HCT116 (cell line): ENCODE measurements at regions of chr13 and their contacts with region 1.

Region 1: GRCh38 chr13:52968074-52968700 is 60.4 kb upstream of the OLFM4 start:
- DNase-seq: peak; percentile 54
- ATAC-seq: peak; percentile 100
- H3K4me3 ChIP-seq: no peak overlapping the region
- H3K27ac ChIP-seq: no peak overlapping the region
- H3K4me1 ChIP-seq: no peaks in the 10 kb centered on the region
- H3K27me3 ChIP-seq: peaks cover 14% of the 10 kb centered on the region
- CTCF ChIP-seq: peak; percentile 85 to 91 (median 90)
- POLR2A ChIP-seq: no peak
- RAD21 ChIP-seq: peak; percentile 76

Region 2: GRCh38 chr13:52665325-52665724 is 302.9 kb before region 1 on chr13:
- CTCF ChIA-PET with region 1: interaction called, 49 read pairs
- POLR2A ChIA-PET with region 1: no interaction called
- RAD21 ChIA-PET with region 1: interaction called, 3 to 6 read pairs
- intact Hi-C with region 1: loop called (anchors 5 kb)
- DNase-seq: peak; percentile 16
- ATAC-seq: no peak
- H3K4me3 ChIP-seq: no peak overlapping the region
- H3K27ac ChIP-seq: no peak overlapping the region
- H3K4me1 ChIP-seq: no peaks in the 10 kb centered on the region
- H3K27me3 ChIP-seq: no peaks in the 10 kb centered on the region
- CTCF ChIP-seq: peak; percentile 20 to 61 (median 54); a peak in 4 of 6 replicates
- POLR2A ChIP-seq: no peak
- RAD21 ChIP-seq: no peak

Region 3: DNA sequence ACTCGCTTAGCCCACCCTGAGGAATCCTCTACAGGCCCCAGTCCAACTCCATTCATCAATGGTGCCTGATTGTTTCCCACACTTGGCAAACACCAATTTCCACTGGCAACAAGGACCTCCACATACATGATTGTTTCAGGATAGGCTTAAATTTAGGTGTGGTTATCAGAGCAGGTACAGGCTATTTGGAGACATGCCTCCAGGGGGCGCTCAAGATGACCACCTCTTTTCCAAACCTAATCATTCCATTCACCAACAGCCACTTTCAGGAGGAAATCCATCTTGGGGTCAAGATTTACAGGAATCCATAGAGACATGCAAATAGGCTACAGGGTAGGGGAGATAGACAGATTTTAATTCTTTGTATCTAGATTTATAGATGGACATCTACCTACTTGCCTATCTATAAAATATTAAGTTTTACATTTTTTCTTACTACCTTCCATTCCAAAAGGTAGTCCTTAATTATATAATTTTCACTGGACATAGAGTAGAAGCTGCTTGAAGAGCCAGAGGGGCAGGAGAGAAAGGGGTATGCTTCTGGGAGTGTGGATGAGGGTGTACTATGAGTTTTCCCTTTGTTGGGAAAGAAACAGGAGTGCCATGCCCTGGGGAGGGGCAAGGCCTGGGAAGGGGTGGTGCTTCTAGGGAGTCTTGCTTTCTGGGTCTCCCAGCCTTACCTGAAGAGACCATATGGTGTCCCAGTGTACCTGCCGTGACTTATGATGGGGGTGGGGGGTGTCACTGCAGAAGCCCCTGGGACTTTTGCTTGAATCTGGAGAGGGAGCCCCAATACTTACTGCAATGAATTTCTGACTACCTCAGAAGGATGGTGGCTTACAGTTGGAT is 105.6 kb before region 1 on chr13:
- CTCF ChIA-PET with region 1: interaction called, 6 read pairs
- POLR2A ChIA-PET with region 1: no interaction called
- RAD21 ChIA-PET with region 1: interaction called in 1 of 2 experiments, 3 read pairs
- intact Hi-C with region 1: loop called (anchors 2 kb)
- DNase-seq: peak; percentile 24
- ATAC-seq: peak; percentile 90
- H3K4me3 ChIP-seq: no peak overlapping the region
- H3K27ac ChIP-seq: no peak overlapping the region
- H3K4me1 ChIP-seq: no peaks in the 10 kb centered on the region
- H3K27me3 ChIP-seq: peaks cover 30% of the 10 kb centered on the region; the same call in 1 of the 2 replicates
- CTCF ChIP-seq: peak; percentile 9 to 88 (median 83); a peak in 4 of 6 replicates
- POLR2A ChIP-seq: no peak
- RAD21 ChIP-seq: peak; percentile 17; the same call in 1 of the 2 replicates

Region 4: GRCh38 chr13:52896827-52897659 is 71.1 kb before region 1 on chr13:
- CTCF ChIA-PET with region 1: interaction called, 18 read pairs
- POLR2A ChIA-PET with region 1: no interaction called
- RAD21 ChIA-PET with region 1: interaction called in 1 of 2 experiments, 4 read pairs
- intact Hi-C with region 1: no loop called
- DNase-seq: peak; percentile 2
- ATAC-seq: peak; percentile 67
- H3K4me3 ChIP-seq: no peak overlapping the region
- H3K27ac ChIP-seq: no peak overlapping the region
- H3K4me1 ChIP-seq: no peaks in the 10 kb centered on the region
- H3K27me3 ChIP-seq: peaks cover 18% of the 10 kb centered on the region; the same call in 1 of the 2 replicates
- CTCF ChIP-seq: peak; percentile 4 to 74 (median 64); a peak in 4 of 6 replicates
- POLR2A ChIP-seq: no peak
- RAD21 ChIP-seq: 0 out of 2 replicates have a peak, but pooled peaks have one; percentile 26

Region 5: DNA sequence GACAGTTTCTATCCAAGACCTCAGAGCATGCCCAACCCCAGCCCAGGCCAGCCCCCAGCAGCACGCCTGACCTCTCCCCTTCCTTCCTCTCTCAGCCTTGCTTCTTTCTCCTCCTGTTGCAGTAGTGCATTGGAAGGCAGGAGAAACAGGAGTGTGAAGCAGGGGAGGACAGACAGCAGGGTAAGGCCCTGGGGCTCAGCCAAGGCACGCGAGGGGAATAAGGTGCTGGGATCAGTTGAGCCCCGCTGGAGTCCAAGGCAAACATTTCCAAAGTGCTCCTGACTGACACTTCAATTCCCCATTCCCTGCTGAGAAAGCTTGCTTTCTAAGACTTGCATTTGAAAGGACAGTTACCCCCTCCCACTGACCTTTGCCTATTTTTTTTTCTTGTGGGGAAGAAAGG is 12.7 kb before region 1 on chr13:
- CTCF ChIA-PET with region 1: interaction called, 11 read pairs
- POLR2A ChIA-PET with region 1: no interaction called
- RAD21 ChIA-PET with region 1: no interaction called
- intact Hi-C with region 1: no loop called
- DNase-seq: no peak
- ATAC-seq: no peak
- H3K4me3 ChIP-seq: no peak overlapping the region
- H3K27ac ChIP-seq: no peak overlapping the region
- H3K4me1 ChIP-seq: no peaks in the 10 kb centered on the region
- H3K27me3 ChIP-seq: 0 out of 2 replicates have a peak, but pooled peaks cover 7% of the 10 kb centered on the region
- CTCF ChIP-seq: no peak
- POLR2A ChIP-seq: no peak
- RAD21 ChIP-seq: no peak